B cell (primary cell): ENCODE measurements at regions of chr13 and their contacts with region 1.

Region 1: GRCh38 chr13:79336966-79337365 is 69.1 kb downstream of the RBM26 start:
- DNase-seq: peak; percentile 35
- ATAC-seq: peak; percentile 28
- H3K4me3 ChIP-seq: no peak overlapping the region
- H3K4me3 Mint-ChIP-seq: no peak overlapping the region
- H3K27ac ChIP-seq: peak overlapping the region in 1 of 2 donors; percentile 5
- H3K27ac Mint-ChIP-seq: peak overlapping the region; percentile 79
- H3K4me1 ChIP-seq: no peaks in the 10 kb centered on the region
- H3K4me1 Mint-ChIP-seq: peaks cover 10% of the 10 kb centered on the region
- H3K27me3 ChIP-seq: no peaks in the 10 kb centered on the region
- H3K27me3 Mint-ChIP-seq: no peaks in the 10 kb centered on the region
- CTCF ChIP-seq: no peak

Region 2: DNA sequence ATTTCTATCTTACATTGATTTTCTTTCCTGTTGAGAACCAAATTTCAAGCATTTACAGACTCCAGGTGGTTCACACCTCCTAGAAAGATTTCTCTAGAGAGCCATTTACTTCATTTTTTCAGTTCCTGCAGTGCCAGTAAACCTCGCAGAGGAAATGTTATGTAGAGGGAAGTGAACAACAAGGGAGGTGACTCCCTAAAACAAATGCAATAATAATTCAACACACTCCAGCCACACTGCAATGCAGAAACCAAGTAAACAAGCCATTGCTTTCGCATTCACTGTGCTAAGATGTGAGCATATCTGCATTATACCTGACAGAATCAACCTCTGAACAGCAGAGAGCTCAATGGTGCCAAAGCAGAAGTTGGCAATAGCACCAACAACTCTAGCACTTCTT is 146.0 kb before region 1 on chr13:
- CTCF ChIA-PET with region 1: no interaction called
- POLR2A ChIA-PET with region 1: no interaction called
- intact Hi-C with region 1: no loop called
- DNase-seq: peak; percentile 50
- ATAC-seq: peak; percentile 36
- H3K4me3 ChIP-seq: peak overlapping the region in 1 of 5 experiments; percentile 22
- H3K4me3 Mint-ChIP-seq: peak overlapping the region; percentile 66
- H3K27ac ChIP-seq: peak overlapping the region; percentile 4 to 34
- H3K27ac Mint-ChIP-seq: peak overlapping the region; percentile 60
- H3K4me1 ChIP-seq: peaks cover 54 to 59% of the 10 kb centered on the region in 2 donors
- H3K4me1 Mint-ChIP-seq: peaks cover 57% of the 10 kb centered on the region
- H3K27me3 ChIP-seq: no peaks in the 10 kb centered on the region
- H3K27me3 Mint-ChIP-seq: no peaks in the 10 kb centered on the region
- CTCF ChIP-seq: no peak

Region 3: DNA sequence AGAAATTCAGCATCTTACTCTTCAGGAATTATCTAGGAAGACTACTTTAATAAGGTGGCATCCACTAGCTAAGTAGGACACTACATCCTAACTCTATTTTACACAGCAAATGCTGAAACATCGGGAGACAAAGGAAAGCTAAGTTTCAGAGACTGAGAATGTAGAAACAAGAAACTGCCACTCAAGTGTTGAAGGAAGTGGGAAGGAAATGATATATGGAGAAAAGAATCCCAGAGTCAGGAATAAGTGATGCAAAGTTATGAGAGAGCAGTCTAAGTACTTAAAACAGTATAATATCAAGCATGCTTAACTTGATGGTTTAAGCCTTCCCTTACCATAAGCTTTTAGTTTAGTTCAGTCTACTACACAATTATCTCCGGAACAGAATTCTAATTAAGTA is 16.7 kb after region 1 on chr13:
- CTCF ChIA-PET with region 1: no interaction called
- POLR2A ChIA-PET with region 1: no interaction called
- intact Hi-C with region 1: loop called (anchors 2 kb)
- DNase-seq: no peak
- ATAC-seq: no peak
- H3K4me3 ChIP-seq: no peak overlapping the region
- H3K4me3 Mint-ChIP-seq: no peak overlapping the region
- H3K27ac ChIP-seq: no peak overlapping the region
- H3K27ac Mint-ChIP-seq: no peak overlapping the region
- H3K4me1 ChIP-seq: no peaks in the 10 kb centered on the region
- H3K4me1 Mint-ChIP-seq: no peaks in the 10 kb centered on the region
- H3K27me3 ChIP-seq: no peaks in the 10 kb centered on the region
- H3K27me3 Mint-ChIP-seq: no peaks in the 10 kb centered on the region
- CTCF ChIP-seq: no peak

Region 4: DNA sequence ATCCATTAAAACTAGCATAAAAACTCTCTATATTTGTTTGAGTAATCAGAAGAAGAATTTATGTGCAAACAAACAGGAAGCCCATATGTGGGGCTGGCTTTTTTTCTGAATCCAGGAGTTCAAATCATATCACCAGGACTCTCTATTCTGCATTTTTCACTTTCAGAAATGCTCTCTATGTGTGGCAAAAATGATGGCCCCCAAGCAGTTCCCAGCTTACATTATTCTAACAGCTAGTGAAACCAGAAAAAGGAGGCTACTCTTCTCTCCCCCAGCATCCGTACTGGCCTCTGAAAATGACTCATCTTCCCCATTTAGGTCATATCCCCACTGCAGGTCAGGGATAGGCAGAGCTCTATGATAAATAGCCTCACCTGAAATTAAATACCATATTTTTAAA is 48.7 kb after region 1 on chr13:
- CTCF ChIA-PET with region 1: no interaction called
- POLR2A ChIA-PET with region 1: no interaction called
- intact Hi-C with region 1: loop called (anchors 10 kb)
- DNase-seq: no peak
- ATAC-seq: peak; percentile 60
- H3K4me3 ChIP-seq: no peak overlapping the region
- H3K4me3 Mint-ChIP-seq: peak overlapping the region; percentile 40
- H3K27ac ChIP-seq: peak overlapping the region in 1 of 2 donors; percentile 33
- H3K27ac Mint-ChIP-seq: no peak overlapping the region
- H3K4me1 ChIP-seq: peaks cover 33 to 74% of the 10 kb centered on the region in 2 donors
- H3K4me1 Mint-ChIP-seq: peaks cover 72% of the 10 kb centered on the region
- H3K27me3 ChIP-seq: no peaks in the 10 kb centered on the region
- H3K27me3 Mint-ChIP-seq: no peaks in the 10 kb centered on the region
- CTCF ChIP-seq: no peak

Region 5: DNA sequence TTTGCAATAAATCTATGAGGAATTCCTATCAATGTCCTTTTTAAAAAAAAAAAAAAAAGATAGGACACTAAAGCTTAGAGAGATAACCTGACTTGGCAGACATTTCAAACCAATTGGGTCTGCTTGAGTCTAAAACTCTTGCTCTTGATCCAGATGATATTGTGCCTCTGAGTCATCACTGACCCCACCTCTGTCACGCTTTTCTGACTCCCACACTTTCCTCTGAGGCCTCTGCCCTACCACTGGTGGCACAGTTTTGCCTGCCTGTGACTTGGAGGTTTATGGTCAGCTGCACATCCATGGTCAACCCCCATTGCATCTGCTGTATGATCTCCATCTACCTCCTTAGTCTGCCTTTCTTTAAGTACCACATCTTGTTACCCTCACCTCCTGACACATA is 675.3 kb after region 1 on chr13:
- CTCF ChIA-PET with region 1: no interaction called
- POLR2A ChIA-PET with region 1: no interaction called
- intact Hi-C with region 1: no loop called
- DNase-seq: no peak
- ATAC-seq: peak; percentile 17
- H3K4me3 ChIP-seq: no peak overlapping the region
- H3K4me3 Mint-ChIP-seq: no peak overlapping the region
- H3K27ac ChIP-seq: no peak overlapping the region
- H3K27ac Mint-ChIP-seq: no peak overlapping the region
- H3K4me1 ChIP-seq: no peaks in the 10 kb centered on the region
- H3K4me1 Mint-ChIP-seq: peaks cover 3% of the 10 kb centered on the region
- H3K27me3 ChIP-seq: no peaks in the 10 kb centered on the region
- H3K27me3 Mint-ChIP-seq: no peaks in the 10 kb centered on the region
- CTCF ChIP-seq: no peak